Calu3 (cell line): ENCODE measurements at regions of chr13 and their contacts with region 1.

Region 1: DNA sequence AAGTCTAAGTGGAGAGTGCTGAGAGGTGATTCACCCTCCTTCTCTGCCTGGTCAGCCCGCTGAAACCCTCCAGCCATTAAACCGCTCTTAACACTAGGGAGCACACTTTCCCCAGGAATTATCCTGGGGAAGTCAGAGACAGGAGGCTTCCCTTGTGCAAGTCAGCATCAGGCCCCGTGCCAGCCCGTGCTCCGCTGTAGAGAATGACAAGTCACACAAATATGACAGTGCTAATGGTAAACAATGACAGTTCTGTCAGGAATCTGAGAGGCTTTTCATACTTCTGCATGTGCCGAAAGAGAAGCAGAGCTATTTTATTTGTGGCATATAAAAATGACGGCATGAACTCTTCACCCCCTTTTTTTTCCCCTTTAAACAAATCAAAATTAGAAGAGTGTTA is 816.9 kb upstream of the SLC10A2 start:
- DNase-seq: peak; percentile 83
- H3K4me3 Mint-ChIP-seq: no peak overlapping the region
- H3K27ac Mint-ChIP-seq: peak overlapping the region; percentile 92
- H3K4me1 Mint-ChIP-seq: peaks cover 17% of the 10 kb centered on the region
- H3K27me3 Mint-ChIP-seq: no peaks in the 10 kb centered on the region
- CTCF ChIP-seq: no peak

Region 2: GRCh38 chr13:104015646-104016396 is 132.7 kb after region 1 on chr13:
- CTCF ChIA-PET with region 1: interaction called, 3 read pairs
- intact Hi-C with region 1: loop called (anchors 1 kb)
- DNase-seq: peak; percentile 19
- H3K4me3 Mint-ChIP-seq: no peak overlapping the region
- H3K27ac Mint-ChIP-seq: peak overlapping the region; percentile 84
- H3K4me1 Mint-ChIP-seq: no peaks in the 10 kb centered on the region
- H3K27me3 Mint-ChIP-seq: no peaks in the 10 kb centered on the region
- CTCF ChIP-seq: no peak

Region 3: GRCh38 chr13:104318121-104318520 is 435.0 kb after region 1 on chr13:
- CTCF ChIA-PET with region 1: no interaction called
- intact Hi-C with region 1: loop called (anchors 5 kb)
- DNase-seq: no peak
- H3K4me3 Mint-ChIP-seq: no peak overlapping the region
- H3K27ac Mint-ChIP-seq: no peak overlapping the region
- H3K4me1 Mint-ChIP-seq: no peaks in the 10 kb centered on the region
- H3K27me3 Mint-ChIP-seq: no peaks in the 10 kb centered on the region
- CTCF ChIP-seq: no peak

Region 4: GRCh38 chr13:104571161-104571892 is 688.2 kb after region 1 on chr13:
- CTCF ChIA-PET with region 1: interaction called, 3 read pairs
- intact Hi-C with region 1: loop called (anchors 5 kb)
- DNase-seq: peak; percentile 60
- H3K4me3 Mint-ChIP-seq: no peak overlapping the region
- H3K27ac Mint-ChIP-seq: peak overlapping the region; percentile 47
- H3K4me1 Mint-ChIP-seq: peaks cover 8% of the 10 kb centered on the region
- H3K27me3 Mint-ChIP-seq: no peaks in the 10 kb centered on the region
- CTCF ChIP-seq: no peak

Region 5: GRCh38 chr13:104586051-104586746 is 703.0 kb after region 1 on chr13:
- CTCF ChIA-PET with region 1: no interaction called
- intact Hi-C with region 1: loop called (anchors 5 kb)
- DNase-seq: peak; percentile 17
- H3K4me3 Mint-ChIP-seq: peak overlapping the region; percentile 66
- H3K27ac Mint-ChIP-seq: peak overlapping the region; percentile 98
- H3K4me1 Mint-ChIP-seq: peaks cover 8% of the 10 kb centered on the region
- H3K27me3 Mint-ChIP-seq: no peaks in the 10 kb centered on the region
- CTCF ChIP-seq: no peak

Region 6: GRCh38 chr13:105202354-105202753 is 1319.2 kb after region 1 on chr13:
- CTCF ChIA-PET with region 1: no interaction called
- intact Hi-C with region 1: loop called (anchors 5 kb)
- DNase-seq: no peak
- H3K4me3 Mint-ChIP-seq: no peak overlapping the region
- H3K27ac Mint-ChIP-seq: no peak overlapping the region
- H3K4me1 Mint-ChIP-seq: no peaks in the 10 kb centered on the region
- H3K27me3 Mint-ChIP-seq: no peaks in the 10 kb centered on the region
- CTCF ChIP-seq: no peak